Right lobe of liver (tissue), 6 donors: ENCODE measurements at regions of chr9 and their contacts with region 1.

Region 1: DNA sequence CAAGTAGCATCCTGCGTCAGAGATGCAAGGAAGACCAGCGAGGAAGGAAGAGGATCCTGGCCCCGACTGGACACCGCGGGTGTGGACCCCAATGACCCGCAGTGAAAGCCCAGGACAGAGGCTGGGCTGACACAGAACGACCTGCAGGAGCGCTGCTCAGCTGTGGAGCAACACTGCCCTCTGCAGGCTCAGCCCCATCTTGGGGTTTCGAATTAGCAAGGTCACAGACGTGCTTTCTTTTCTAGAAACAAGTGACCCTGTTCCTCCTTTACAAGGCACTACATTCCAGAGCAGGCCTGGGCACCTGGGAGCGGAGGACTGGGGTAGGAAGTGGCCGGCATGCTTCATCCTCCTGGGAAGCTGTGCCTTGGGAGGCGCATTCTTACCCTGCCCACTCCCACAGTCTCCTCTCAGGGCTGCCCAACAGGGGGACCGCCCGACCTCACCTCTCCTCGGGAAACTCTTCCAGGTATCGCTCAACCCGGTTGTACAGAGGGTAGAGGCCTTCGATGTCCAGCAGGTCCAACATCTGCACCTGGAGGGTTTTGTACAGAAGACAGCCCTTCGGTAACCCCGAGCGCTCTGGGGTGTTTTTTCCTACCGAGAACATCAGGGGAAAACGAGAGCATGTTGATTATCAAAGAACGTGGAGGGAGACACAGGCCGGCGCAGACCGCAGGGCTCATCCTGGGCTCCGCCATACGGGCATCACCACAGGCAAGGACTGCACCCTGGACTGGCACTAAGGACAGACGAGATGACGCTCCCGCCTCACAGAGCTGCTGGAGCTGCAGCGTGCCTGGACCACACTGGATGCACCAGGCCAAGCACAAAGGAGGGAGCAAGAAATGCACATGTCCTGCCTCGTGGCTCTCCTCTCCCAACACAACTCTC is 35.0 kb downstream of the IPPK start:
- DNase-seq: peak; percentile 72 to 81 (median 79)
- ATAC-seq: peak; percentile 89 to 97 (median 94)
- H3K4me3 ChIP-seq: no peak overlapping the region
- H3K27ac ChIP-seq: no peak overlapping the region
- H3K4me1 ChIP-seq: no peaks in the 10 kb centered on the region
- H3K27me3 ChIP-seq: no peaks in the 10 kb centered on the region
- CTCF ChIP-seq: peak; percentile 91 to 95 (median 92)
- POLR2A ChIP-seq: no peak

Region 2: DNA sequence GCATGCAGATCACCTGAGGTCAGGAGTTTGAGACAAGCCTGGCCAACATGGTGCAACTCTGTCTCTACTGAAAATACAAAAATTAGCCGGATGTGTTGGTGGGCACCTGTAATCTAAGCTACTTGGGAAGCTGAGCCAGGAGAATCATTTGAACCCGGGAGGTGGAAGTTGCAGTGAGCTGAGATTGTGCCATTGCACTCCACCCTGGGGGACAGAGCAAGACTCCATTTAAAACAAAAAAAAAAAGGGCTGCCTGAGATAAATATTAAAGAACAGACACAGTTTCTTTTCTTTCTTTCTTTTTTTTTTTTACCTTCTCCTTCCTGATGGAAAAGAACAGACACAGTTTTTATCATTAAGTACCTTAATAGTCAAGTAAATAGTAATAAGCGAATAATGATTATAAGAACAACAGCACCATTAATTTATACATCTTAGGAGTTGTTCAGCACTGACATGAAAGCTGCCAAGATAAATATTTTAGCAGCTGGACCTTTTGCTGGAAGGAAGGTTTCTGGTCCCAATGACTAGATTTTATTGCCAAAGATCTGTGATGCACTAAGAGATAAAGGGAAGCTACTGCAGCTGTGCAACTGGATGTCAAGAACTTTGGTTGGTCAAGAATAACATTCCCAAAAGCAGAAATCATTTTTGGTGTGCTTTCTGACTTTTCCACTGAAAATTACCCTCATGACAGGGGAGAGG is 302.2 kb before region 1 on chr9:
- intact Hi-C with region 1: loop called in 1 of 2 experiments (anchors 10 kb)
- DNase-seq: no peak
- ATAC-seq: no peak
- H3K4me3 ChIP-seq: no peak overlapping the region
- H3K27ac ChIP-seq: no peak overlapping the region
- H3K4me1 ChIP-seq: no peaks in the 10 kb centered on the region
- H3K27me3 ChIP-seq: no peaks in the 10 kb centered on the region
- CTCF ChIP-seq: no peak
- POLR2A ChIP-seq: no peak

Region 3: DNA sequence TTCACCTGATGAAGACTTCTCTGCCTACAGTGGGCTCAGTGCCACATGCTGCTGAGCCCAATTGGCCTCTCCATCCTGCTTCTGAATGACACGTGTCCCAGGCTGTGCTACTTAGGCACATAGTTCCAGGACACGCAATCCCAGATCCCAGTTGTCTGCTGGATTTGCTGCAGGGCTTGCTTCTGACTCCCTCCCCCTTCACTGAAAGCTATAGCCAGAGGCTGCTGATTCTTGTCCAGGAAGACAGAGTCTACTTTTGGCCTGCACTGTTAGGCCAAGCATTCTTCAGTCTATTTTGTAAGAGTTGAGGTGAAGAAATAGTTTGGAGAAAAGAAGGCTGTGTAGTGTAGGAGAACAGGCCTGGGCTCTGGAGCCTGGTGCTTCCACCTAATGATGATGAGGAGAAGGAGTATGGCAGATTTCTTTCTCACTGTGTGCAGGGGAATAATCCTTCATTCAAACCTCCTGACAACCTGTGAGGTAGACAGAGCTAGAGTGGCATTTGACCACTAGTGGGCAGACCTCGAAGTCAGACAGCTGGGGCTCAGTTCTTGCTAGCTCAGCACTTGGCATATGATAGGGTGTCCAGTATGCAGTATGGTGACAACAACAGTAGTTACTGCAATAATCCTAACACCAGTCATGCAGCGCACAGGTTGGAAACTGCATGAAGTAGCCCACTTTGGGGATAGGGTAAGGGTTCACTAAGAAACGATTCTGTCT is 133.1 kb before region 1 on chr9:
- intact Hi-C with region 1: loop called in 1 of 2 experiments (anchors 10 kb)
- DNase-seq: peak in 2 of 3 donors; percentile 29 to 60
- ATAC-seq: peak; percentile 96 to 99 (median 98)
- H3K4me3 ChIP-seq: no peak overlapping the region
- H3K27ac ChIP-seq: no peak overlapping the region
- H3K4me1 ChIP-seq: peaks cover 0 to 4% (median 0%) of the 10 kb centered on the region in 4 donors
- H3K27me3 ChIP-seq: no peaks in the 10 kb centered on the region
- CTCF ChIP-seq: peak; percentile 54 to 67 (median 60)
- POLR2A ChIP-seq: no peak